ENCODE measurements at regions of chr21 and their contacts with region 1.

Region 1: GRCh38 chr21:38126669-38127303 is 130.0 kb upstream of the KCNJ15 start:
- DNase-seq: peak; percentile 23 to 56 (median 39)
- ATAC-seq: peak in 3 of 4 donors; percentile 57 to 72 (median 68)
- H3K4me3 ChIP-seq: no peak overlapping the region
- H3K27ac ChIP-seq: no peak overlapping the region
- H3K4me1 ChIP-seq: no peaks in the 10 kb centered on the region
- H3K27me3 ChIP-seq: peaks cover 0 to 12% (median 0%) of the 10 kb centered on the region in 9 donors
- CTCF ChIP-seq: peak; percentile 41 to 75 (median 64)
- POLR2A ChIP-seq: no peak

Region 2: GRCh38 chr21:37904856-37905255 is 221.9 kb before region 1 on chr21:
- intact Hi-C with region 1: loop called in 2 of 10 experiments (anchors 10 kb)
- DNase-seq: peak in 4 of 5 donors; percentile 16 to 67 (median 35)
- ATAC-seq: peak; percentile 67 to 94 (median 90)
- H3K4me3 ChIP-seq: no peak overlapping the region
- H3K27ac ChIP-seq: no peak overlapping the region
- H3K4me1 ChIP-seq: peaks cover 0 to 3% (median 0%) of the 10 kb centered on the region in 12 donors
- H3K27me3 ChIP-seq: peaks cover 0 to 21% (median 0%) of the 10 kb centered on the region in 9 donors
- CTCF ChIP-seq: no peak
- POLR2A ChIP-seq: no peak

Region 3: GRCh38 chr21:37916310-37917051 is 210.3 kb before region 1 on chr21 and contains the start of gene KCNJ6:
- intact Hi-C with region 1: loop called in 3 of 10 experiments (anchors 5 to 10 kb)
- DNase-seq: peak in 4 of 5 donors; percentile 21 to 66 (median 38)
- ATAC-seq: peak; percentile 42 to 83 (median 53)
- H3K4me3 ChIP-seq: peak within 1 kb of the TSS in 10 of 12 donors; percentile 8 to 42 (median 27)
- H3K27ac ChIP-seq: no peak within 1 kb of the TSS
- H3K4me1 ChIP-seq: peaks cover 0 to 21% (median 13%) of the 10 kb centered on the region in 12 donors
- H3K27me3 ChIP-seq: peaks cover 16 to 84% (median 28%) of the 10 kb centered on the region in 9 donors
- CTCF ChIP-seq: peak; percentile 11 to 58 (median 45)
- POLR2A ChIP-seq: no peak
- total RNA-seq, gene KCNJ6: not detected

Measured in heart left ventricle (tissue), 16 donors.